Activated CD4-positive, alpha-beta T cell treated with anti-CD3 and anti-CD28 coated beads for 36 hours (primary cell): ENCODE measurements at regions of chr2 and their contacts with region 1.

Region 1: GRCh38 chr2:143397884-143398614 is 268.8 kb downstream of the ARHGAP15 start:
- DNase-seq: no peak
- ATAC-seq: peak; percentile 94
- H3K4me3 Mint-ChIP-seq: no peak overlapping the region
- H3K27ac Mint-ChIP-seq: no peak overlapping the region
- H3K4me1 Mint-ChIP-seq: peaks cover 55% of the 10 kb centered on the region
- H3K27me3 Mint-ChIP-seq: no peaks in the 10 kb centered on the region

Region 2: DNA sequence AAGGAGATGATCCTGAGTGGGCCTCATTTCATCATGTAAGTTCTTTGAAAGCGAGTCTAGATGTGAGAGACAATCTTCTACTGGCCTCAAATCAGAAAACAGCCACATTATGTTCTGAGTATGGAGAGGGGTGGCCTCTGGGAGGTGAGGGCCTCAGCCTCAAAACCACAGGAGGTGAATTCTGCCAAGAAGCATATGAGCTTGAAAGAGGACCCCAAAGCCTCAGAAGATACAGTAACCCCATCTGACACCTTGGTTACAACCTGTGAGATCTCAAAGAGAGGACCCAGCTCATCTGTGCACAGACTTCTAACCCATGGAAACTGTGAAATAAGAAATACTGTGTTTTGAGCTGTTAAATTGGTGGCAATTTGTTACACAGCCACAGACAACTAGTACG is 68.8 kb before region 1 on chr2:
- CTCF ChIA-PET with region 1: no interaction called
- POLR2A ChIA-PET with region 1: no interaction called
- intact Hi-C with region 1: loop called in 1 of 2 experiments (anchors 1 kb)
- DNase-seq: no peak
- ATAC-seq: peak; percentile 36
- H3K4me3 Mint-ChIP-seq: no peak overlapping the region
- H3K27ac Mint-ChIP-seq: peak overlapping the region; percentile 13
- H3K4me1 Mint-ChIP-seq: peaks cover 66% of the 10 kb centered on the region
- H3K27me3 Mint-ChIP-seq: no peaks in the 10 kb centered on the region